PC-9 (cell line): ENCODE measurements at regions of chr4 and their contacts with region 1.

Region 1: GRCh38 chr4:153573881-153574802 is 108.0 kb downstream of the TMEM131L start:
- DNase-seq: peak; percentile 46 to 57
- H3K4me3 ChIP-seq: no peak overlapping the region
- H3K27ac ChIP-seq: no peak overlapping the region
- H3K4me1 ChIP-seq: peaks cover 5% of the 10 kb centered on the region; the same call in 1 of the 2 replicates
- H3K27me3 ChIP-seq: no peaks in the 10 kb centered on the region
- CTCF ChIP-seq: peak; percentile 67

Region 2: GRCh38 chr4:152850377-152850776 is 723.8 kb before region 1 on chr4:
- CTCF ChIA-PET with region 1: no interaction called
- POLR2A ChIA-PET with region 1: no interaction called
- intact Hi-C with region 1: loop called (anchors 1 kb)
- DNase-seq: peak; percentile 19 to 64
- H3K4me3 ChIP-seq: no peak overlapping the region
- H3K27ac ChIP-seq: peak overlapping the region; percentile 74
- H3K4me1 ChIP-seq: peaks cover 20% of the 10 kb centered on the region
- H3K27me3 ChIP-seq: no peaks in the 10 kb centered on the region
- CTCF ChIP-seq: no peak

Region 3: GRCh38 chr4:153142700-153143438 is 431.3 kb before region 1 on chr4:
- CTCF ChIA-PET with region 1: no interaction called
- POLR2A ChIA-PET with region 1: no interaction called
- intact Hi-C with region 1: loop called (anchors 1 kb)
- DNase-seq: peak; percentile 52 to 62
- H3K4me3 ChIP-seq: peak overlapping the region; percentile 29; the same call in 1 of the 2 replicates
- H3K27ac ChIP-seq: peak overlapping the region; percentile 82
- H3K4me1 ChIP-seq: peaks cover 31% of the 10 kb centered on the region
- H3K27me3 ChIP-seq: no peaks in the 10 kb centered on the region
- CTCF ChIP-seq: peak; percentile 82

Region 4: DNA sequence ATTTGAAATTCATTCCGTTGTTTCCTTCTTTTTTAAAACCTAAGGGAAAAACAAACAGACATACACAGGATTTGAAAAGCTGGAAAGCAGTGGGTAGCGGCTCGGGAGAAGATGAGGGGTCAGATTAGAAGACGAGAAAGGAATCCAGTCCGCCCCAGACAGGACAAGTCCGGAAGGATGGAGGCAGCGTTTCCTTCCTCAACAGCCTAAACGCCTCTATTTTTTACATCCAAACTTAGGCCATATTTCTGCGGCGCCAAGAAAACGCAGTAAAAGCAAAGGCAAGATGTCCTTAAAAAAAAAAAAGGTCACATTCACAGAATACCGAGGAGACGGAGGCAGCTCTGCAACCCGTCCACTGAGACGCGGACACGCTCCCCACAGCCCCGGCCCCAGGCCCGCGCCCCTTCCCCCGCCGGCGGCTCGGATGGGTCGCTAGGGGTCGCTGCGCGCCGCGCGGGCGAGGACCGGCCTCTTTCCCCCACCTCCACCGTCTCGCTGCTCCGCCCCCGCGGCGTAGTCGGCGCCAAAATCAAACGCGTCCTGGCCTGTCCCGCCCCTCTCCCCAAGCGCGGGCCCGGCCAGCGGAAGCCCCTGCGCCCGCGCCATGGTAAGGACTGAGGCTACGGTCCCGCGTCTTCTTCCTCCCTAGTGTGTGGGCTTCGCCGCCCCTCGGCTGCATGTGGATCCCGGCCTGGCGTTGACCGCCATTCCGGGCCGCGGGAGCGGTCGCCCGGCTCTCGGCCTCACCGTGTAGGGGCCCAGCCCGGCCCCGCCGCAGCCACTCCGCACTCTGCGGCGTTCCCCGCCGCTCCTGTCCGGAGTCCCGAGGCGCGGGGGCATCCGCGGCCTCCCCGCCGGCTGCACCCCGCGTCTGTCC is 229.8 kb before region 1 on chr4 and contains the start of gene MND1:
- CTCF ChIA-PET with region 1: interaction called, 3 read pairs
- POLR2A ChIA-PET with region 1: no interaction called
- intact Hi-C with region 1: loop called (anchors 1 kb)
- DNase-seq: peak; percentile 38 to 88
- H3K4me3 ChIP-seq: peak within 1 kb of the TSS; percentile 92
- H3K27ac ChIP-seq: peak within 1 kb of the TSS; percentile 70
- H3K4me1 ChIP-seq: peaks cover 34% of the 10 kb centered on the region
- H3K27me3 ChIP-seq: no peaks in the 10 kb centered on the region
- CTCF ChIP-seq: peak; percentile 82
- total RNA-seq, gene MND1: 17.6 and 24.4 TPM in 2 replicates

Region 5: DNA sequence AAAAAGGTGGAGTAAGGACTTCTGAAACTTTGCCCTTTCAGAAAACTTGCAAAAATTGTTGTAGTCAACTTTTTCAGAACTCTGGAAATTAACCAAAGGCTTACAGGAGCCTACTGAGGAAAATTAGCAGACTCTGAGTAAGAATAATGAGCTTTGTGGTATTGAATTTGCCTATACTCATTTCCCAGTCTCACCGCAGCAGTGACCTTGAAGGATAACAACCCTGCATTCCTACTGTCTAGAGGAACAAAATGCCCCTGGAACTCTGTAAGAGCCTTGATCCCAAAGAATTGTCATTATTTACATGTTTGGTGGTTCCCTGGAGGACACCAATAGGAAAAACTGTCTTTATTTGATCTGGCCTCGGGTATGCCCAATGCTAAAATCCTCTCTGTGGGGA is 171.8 kb before region 1 on chr4:
- CTCF ChIA-PET with region 1: no interaction called
- POLR2A ChIA-PET with region 1: no interaction called
- intact Hi-C with region 1: no loop called
- DNase-seq: no peak
- H3K4me3 ChIP-seq: no peak overlapping the region
- H3K27ac ChIP-seq: no peak overlapping the region
- H3K4me1 ChIP-seq: no peaks in the 10 kb centered on the region
- H3K27me3 ChIP-seq: no peaks in the 10 kb centered on the region
- CTCF ChIP-seq: no peak

Region 6: DNA sequence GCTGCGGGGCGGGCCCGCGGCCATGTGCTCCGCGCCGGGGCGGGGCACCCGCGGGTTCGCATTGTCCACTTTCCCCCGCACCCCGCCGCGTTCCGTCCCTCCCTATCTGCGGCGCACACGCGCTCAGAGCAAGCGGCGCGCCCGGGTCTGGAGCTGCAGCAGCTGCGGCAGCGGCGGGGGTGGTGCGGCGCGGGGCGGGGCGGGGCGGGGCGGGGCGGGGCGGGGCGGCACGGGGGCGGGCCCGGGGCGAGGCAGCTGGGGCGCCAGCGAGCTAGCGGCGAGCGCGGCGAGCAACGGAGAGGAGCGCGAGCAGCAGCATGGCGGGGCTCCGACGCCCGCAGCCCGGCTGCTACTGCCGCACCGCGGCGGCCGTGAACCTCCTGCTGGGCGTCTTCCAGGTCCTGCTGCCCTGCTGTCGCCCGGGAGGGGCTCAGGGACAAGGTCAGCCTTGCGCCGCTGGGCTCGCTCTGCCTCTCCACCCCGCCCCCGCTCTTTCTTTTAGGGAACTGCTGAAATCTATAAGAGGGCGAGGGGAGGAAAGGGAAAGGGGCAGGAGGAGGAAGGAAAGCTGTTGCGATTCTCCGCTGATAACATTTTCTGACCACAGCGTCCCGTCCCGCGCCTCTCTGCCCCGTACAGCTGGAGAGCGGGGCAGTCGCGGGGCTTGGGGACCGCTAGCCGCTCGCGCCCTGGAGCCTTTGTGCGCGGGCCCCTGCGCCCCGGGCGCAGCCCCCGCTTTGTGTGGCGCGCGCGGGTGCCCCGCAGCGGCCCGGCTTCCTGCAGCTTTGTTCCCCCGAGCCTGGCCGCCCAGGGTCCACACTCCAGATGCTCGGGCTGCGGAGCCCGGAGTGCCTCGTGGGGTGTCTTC is 107.8 kb before region 1 on chr4 and contains the start of gene TMEM131L:
- CTCF ChIA-PET with region 1: interaction called, 7 read pairs
- POLR2A ChIA-PET with region 1: no interaction called
- intact Hi-C with region 1: loop called (anchors 1 kb)
- DNase-seq: peak in 1 of 2 experiments; percentile 46
- H3K4me3 ChIP-seq: peak within 1 kb of the TSS; percentile 87
- H3K27ac ChIP-seq: peak within 1 kb of the TSS; percentile 62
- H3K4me1 ChIP-seq: peaks cover 27% of the 10 kb centered on the region
- H3K27me3 ChIP-seq: no peaks in the 10 kb centered on the region
- CTCF ChIP-seq: no peak
- total RNA-seq, gene TMEM131L: 3.8 and 6.0 TPM in 2 replicates